Breast epithelium (tissue), 4 donors: ENCODE measurements at regions of chr2 and their contacts with region 1.

Region 1: GRCh38 chr2:68357605-68358337 is 7.3 kb upstream of the PLEK start:
- DNase-seq: no peak
- H3K4me3 ChIP-seq: no peak overlapping the region
- H3K27ac ChIP-seq: no peak overlapping the region
- H3K4me1 ChIP-seq: no peaks in the 10 kb centered on the region
- H3K27me3 ChIP-seq: no peaks in the 10 kb centered on the region
- CTCF ChIP-seq: no peak
- POLR2A ChIP-seq: no peak

Region 2: DNA sequence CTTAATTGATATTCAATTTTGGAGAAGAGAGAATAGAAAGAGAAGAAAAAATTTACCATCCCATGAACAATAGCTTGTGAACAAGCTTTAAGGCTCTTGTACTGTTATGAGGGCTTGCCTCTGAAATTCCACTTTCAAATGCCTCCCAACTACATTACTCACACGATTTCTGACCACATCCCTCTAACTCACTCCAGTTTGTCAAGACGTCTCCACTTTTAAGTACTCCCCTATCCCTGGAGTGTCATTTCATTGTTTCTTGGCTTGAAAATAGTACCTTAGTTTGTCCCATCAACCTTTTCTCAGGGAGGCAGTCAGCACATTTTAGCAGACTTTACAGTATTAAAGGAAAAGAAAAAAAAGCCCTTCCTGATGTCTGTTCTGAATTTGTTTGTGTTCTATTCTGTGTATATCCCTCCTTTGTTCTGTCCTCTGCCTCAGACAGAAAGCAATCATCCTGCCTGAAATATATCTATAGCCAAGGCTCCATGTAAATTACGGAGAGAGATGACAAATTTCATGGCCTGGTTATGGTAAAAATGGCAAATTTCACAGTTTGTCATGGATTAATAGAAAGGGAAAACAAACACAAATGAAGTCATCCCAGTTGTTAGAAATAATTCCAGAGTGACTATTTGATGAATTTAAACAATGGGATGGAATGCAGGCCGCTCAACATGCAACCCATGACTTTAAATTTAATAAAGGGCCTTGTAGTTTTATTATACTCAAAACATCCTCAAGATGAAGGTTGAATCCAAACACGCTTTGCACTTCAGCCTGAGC is 731.9 kb before region 1 on chr2:
- intact Hi-C with region 1: loop called (anchors 10 kb)
- DNase-seq: no peak
- H3K4me3 ChIP-seq: no peak overlapping the region
- H3K27ac ChIP-seq: peak overlapping the region; percentile 27 to 33
- H3K4me1 ChIP-seq: no peaks in the 10 kb centered on the region
- H3K27me3 ChIP-seq: no peaks in the 10 kb centered on the region
- CTCF ChIP-seq: no peak
- POLR2A ChIP-seq: no peak